CD4-positive, alpha-beta memory T cell (primary cell): ENCODE measurements at regions of chr10 and their contacts with region 1.

Region 1: DNA sequence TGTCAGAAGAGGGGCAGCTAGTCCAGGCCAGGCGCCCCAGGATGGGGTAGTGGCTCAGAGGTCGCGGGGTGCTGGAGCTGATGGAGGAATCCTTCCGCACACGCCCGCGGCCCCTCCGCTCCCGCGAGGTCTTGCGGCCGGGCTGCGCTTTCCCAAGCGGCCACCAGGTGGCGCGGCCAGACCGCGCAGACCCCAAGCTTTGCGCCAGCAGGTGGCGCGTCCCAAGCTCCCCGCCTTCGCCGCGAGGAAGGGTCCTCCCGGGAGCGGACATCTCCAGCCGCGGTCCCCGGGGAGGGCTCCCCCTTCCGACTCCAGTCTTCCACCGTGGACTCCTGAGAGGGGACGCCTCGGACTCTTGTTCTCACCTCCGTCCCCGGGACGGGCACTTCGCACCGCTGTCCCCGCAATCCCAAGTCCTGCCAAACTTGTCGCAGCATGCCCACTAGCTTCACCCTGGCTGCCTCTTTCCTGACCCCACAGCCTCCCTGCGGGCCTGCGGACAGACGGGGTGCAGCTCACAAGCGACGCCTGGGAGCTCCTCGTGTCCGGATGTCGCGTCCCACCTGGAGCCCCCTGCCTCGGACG is 19.4 kb downstream of the KCNK18 start:
- DNase-seq: peak in 4 of 5 donors; percentile 52 to 63 (median 60)
- H3K4me3 ChIP-seq: peak overlapping the region; percentile 42 to 72
- H3K4me3 Mint-ChIP-seq: peak overlapping the region; percentile 70 to 81 (median 77)
- H3K27ac ChIP-seq: no peak overlapping the region
- H3K27ac Mint-ChIP-seq: no peak overlapping the region
- H3K4me1 ChIP-seq: peaks cover 12% of the 10 kb centered on the region
- H3K4me1 Mint-ChIP-seq: peaks cover 1 to 11% (median 8%) of the 10 kb centered on the region in 4 donors
- H3K27me3 ChIP-seq: peaks cover 4% of the 10 kb centered on the region
- H3K27me3 Mint-ChIP-seq: peaks cover 9 to 20% of the 10 kb centered on the region in 2 donors

Region 2: GRCh38 chr10:116324951-116325635 is 891.6 kb before region 1 on chr10:
- CTCF ChIA-PET with region 1: no interaction called
- POLR2A ChIA-PET with region 1: no interaction called
- intact Hi-C with region 1: no loop called
- DNase-seq: no peak
- H3K4me3 ChIP-seq: no peak overlapping the region
- H3K4me3 Mint-ChIP-seq: no peak overlapping the region
- H3K27ac ChIP-seq: no peak overlapping the region
- H3K27ac Mint-ChIP-seq: peak overlapping the region in 1 of 7 donors; percentile 57
- H3K4me1 ChIP-seq: no peaks in the 10 kb centered on the region
- H3K4me1 Mint-ChIP-seq: no peaks in the 10 kb centered on the region
- H3K27me3 ChIP-seq: no peaks in the 10 kb centered on the region
- H3K27me3 Mint-ChIP-seq: no peaks in the 10 kb centered on the region

Region 3: DNA sequence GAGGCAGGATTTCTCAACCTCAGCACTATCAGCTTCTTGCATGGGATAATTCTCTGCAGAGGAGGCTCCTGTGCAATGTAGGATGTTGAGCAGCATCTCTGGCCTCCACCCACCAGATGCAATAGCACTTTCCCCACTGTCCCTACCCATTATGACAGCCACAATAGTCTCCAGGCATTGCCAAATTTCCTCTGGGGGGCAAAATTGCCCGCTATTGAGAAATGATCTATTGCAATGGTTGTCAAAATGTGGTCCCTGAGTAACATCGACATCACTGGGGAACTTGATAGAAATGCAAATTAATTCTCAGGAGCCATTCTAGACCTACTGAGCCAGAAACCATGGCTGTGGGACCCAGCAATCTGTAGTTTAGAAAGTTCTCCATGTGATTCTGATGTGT is 12.4 kb before region 1 on chr10:
- CTCF ChIA-PET with region 1: interaction called, 37 read pairs
- POLR2A ChIA-PET with region 1: no interaction called
- intact Hi-C with region 1: no loop called
- DNase-seq: no peak
- H3K4me3 ChIP-seq: no peak overlapping the region
- H3K4me3 Mint-ChIP-seq: no peak overlapping the region
- H3K27ac ChIP-seq: no peak overlapping the region
- H3K27ac Mint-ChIP-seq: no peak overlapping the region
- H3K4me1 ChIP-seq: no peaks in the 10 kb centered on the region
- H3K4me1 Mint-ChIP-seq: no peaks in the 10 kb centered on the region
- H3K27me3 ChIP-seq: no peaks in the 10 kb centered on the region
- H3K27me3 Mint-ChIP-seq: peaks cover 8 to 13% of the 10 kb centered on the region in 2 donors

Region 4: DNA sequence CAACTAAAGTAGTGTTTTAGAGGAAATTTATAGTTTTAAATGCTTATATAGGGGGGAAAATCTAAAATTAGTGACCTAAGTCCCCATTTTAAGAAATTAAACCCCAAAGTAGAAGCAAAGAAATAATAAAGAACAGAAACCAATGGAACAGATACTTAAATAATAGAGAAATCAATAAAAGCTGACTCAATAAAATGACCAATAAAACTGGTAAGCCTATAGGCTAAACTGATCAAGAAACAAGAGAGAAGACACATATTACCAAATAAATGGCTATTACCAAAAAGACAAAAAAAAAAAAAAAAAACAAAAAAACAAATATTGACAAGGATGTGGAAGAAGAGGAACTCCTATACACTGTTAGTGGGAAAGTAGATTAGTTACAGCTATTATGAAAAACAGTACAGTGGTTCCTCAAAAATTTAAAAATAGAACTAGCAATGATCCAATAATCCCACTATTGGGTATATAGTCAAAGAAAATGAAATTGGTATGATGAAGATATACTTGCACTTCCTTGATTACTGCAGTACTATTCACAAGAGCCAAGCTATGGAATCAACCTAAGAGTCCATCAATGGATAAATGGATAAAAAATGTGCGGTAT is 77.4 kb after region 1 on chr10:
- CTCF ChIA-PET with region 1: no interaction called
- POLR2A ChIA-PET with region 1: no interaction called
- intact Hi-C with region 1: no loop called
- DNase-seq: no peak
- H3K4me3 ChIP-seq: no peak overlapping the region
- H3K4me3 Mint-ChIP-seq: no peak overlapping the region
- H3K27ac ChIP-seq: no peak overlapping the region
- H3K27ac Mint-ChIP-seq: no peak overlapping the region
- H3K4me1 ChIP-seq: no peaks in the 10 kb centered on the region
- H3K4me1 Mint-ChIP-seq: peaks cover 4 to 11% (median 9%) of the 10 kb centered on the region in 4 donors
- H3K27me3 ChIP-seq: no peaks in the 10 kb centered on the region
- H3K27me3 Mint-ChIP-seq: no peaks in the 10 kb centered on the region

Region 5: DNA sequence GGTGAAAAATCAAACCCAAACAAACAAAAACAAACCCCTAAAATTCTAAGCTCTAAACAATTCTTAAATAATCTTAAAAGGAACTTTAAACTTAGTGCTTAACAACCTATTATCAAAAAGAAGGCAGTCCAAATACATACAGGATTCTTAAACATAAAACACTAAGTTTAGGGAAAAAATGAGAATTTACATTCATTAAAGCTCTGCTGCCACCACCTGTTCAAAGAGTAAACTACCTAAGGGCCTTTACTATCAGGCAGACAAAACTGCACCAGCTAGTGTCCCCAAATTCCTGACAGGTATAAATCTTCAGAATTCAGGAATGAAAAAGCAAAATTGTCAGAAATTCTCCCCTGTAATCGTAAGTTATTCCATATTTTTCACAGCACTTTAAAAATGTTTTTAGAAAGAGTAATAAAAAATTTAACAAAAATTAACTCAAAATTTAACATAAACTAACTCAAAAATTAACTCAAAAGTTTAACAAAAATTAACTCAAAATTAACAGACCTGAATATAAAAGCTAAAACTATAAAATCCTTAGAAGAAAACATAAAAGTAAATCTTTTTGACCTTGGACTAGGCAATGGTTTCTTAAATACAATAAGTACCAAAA is 103.5 kb after region 1 on chr10:
- CTCF ChIA-PET with region 1: interaction called, 70 read pairs
- POLR2A ChIA-PET with region 1: interaction called, 4 read pairs
- intact Hi-C with region 1: loop called (anchors 1 kb)
- DNase-seq: peak in 2 of 5 donors; percentile 1 to 15
- H3K4me3 ChIP-seq: no peak overlapping the region
- H3K4me3 Mint-ChIP-seq: no peak overlapping the region
- H3K27ac ChIP-seq: no peak overlapping the region
- H3K27ac Mint-ChIP-seq: no peak overlapping the region
- H3K4me1 ChIP-seq: no peaks in the 10 kb centered on the region
- H3K4me1 Mint-ChIP-seq: peaks cover 0 to 10% (median 7%) of the 10 kb centered on the region in 4 donors
- H3K27me3 ChIP-seq: no peaks in the 10 kb centered on the region
- H3K27me3 Mint-ChIP-seq: no peaks in the 10 kb centered on the region

Region 6: GRCh38 chr10:117431160-117431559 is 214.5 kb after region 1 on chr10:
- CTCF ChIA-PET with region 1: interaction called, 12 read pairs
- POLR2A ChIA-PET with region 1: no interaction called
- intact Hi-C with region 1: no loop called
- DNase-seq: no peak
- H3K4me3 ChIP-seq: no peak overlapping the region
- H3K4me3 Mint-ChIP-seq: no peak overlapping the region
- H3K27ac ChIP-seq: no peak overlapping the region
- H3K27ac Mint-ChIP-seq: peak overlapping the region in 1 of 7 donors; percentile 19
- H3K4me1 ChIP-seq: no peaks in the 10 kb centered on the region
- H3K4me1 Mint-ChIP-seq: no peaks in the 10 kb centered on the region
- H3K27me3 ChIP-seq: no peaks in the 10 kb centered on the region
- H3K27me3 Mint-ChIP-seq: peaks cover 3 to 18% of the 10 kb centered on the region in 2 donors

Region 7: GRCh38 chr10:117496616-117497028 is 279.9 kb after region 1 on chr10:
- CTCF ChIA-PET with region 1: interaction called, 13 read pairs
- POLR2A ChIA-PET with region 1: no interaction called
- intact Hi-C with region 1: no loop called
- DNase-seq: peak; percentile 38 to 63 (median 55)
- H3K4me3 ChIP-seq: no peak overlapping the region
- H3K4me3 Mint-ChIP-seq: peak overlapping the region in 1 of 8 donors; percentile 32
- H3K27ac ChIP-seq: no peak overlapping the region
- H3K27ac Mint-ChIP-seq: no peak overlapping the region
- H3K4me1 ChIP-seq: no peaks in the 10 kb centered on the region
- H3K4me1 Mint-ChIP-seq: peaks cover 0 to 4% (median 2%) of the 10 kb centered on the region in 4 donors
- H3K27me3 ChIP-seq: peaks cover 8% of the 10 kb centered on the region
- H3K27me3 Mint-ChIP-seq: peaks cover 13 to 16% of the 10 kb centered on the region in 2 donors